ENCODE measurements at regions of chr14 and their contacts with region 1.

Region 1: DNA sequence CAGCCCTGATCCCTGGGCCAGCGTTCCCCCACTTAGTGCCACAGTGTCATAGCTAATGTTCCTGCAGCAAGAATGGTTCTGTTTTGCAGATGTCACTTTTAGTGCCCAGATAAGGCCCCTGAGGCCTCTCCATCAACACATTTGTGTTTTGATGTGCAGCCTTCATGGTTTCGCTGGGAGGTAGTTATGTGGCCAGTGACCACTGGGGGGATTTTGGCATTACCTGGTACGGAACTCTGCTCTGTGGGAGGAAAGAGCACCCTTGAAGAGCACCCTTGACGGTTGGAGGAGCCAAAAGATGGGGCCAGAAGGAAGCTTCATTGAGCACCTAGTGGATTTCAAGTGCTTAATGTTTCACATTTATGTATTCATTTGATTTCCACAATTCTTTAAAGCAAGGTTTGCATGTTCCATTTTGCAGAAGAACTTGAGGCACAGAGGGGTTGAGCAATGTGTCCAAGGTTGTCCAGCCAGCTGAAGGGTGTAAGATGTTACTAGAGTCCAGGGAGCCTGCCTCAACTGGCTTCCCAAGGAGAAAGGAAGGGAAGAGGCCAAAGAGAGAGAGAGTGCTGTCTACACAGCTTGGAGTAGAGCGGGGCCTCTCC is 13.0 kb downstream of the SERPINA11 start:
- DNase-seq: no peak
- CTCF ChIP-seq: no peak

Region 2: GRCh38 chr14:93838238-93838637 is 601.3 kb before region 1 on chr14:
- in situ Hi-C with region 1: no loop called
- DNase-seq: no peak
- CTCF ChIP-seq: no peak

Region 3: DNA sequence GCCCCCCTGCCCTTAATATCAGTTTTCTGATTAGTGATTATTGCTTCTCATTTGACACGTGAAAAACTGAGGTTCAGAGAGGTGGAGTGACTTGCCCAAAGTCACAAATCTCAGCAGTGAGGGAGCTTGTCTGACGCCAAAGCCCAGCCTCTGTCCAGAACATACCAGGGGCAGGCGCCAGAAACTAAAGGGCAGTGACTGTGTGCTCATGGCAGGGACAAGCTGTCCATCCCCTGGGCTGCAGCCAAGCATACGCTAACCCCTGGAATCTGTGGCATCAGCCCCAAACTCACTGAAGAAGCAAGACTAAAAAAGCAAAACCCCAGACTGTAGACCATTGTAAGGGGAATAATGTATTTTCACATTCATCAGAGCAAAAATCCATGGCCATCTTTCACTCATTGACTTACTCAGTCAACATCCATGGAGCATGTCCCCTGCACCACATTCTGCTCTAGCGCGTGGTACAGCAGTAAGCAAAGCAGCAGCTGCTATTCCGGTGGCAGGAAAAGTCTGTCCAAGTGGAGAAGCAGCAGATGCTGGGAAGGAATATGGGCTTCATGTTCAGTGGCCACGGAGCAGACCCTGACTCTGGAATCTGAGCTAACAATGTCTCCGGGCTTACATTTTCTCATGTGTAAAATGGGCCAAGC is 120.2 kb after region 1 on chr14:
- in situ Hi-C with region 1: loop called (anchors 10 kb)
- DNase-seq: no peak
- CTCF ChIP-seq: no peak

Measured in GM13976 (cell line).